ENCODE measurements at regions of chr19 and their contacts with region 1.

Region 1: DNA sequence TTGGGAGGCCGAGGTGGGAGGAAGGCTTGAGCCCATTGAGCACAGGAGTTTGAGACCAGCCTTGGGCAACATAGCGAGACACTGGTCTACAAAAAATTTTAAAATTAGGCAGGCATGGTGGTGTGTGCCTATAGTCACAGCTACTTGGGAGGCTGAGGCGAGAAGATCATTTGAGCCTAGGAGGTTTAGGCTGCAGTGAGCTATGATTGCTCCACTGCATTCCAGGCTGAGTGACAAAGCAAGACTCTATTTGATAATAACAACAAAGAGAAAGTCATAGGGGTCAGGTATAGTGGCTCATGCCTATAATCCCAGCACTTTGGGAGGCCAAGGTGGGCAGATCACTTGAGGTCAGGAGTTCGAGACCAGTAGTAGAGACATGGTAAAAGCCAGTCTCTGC is 4.6 kb upstream of the SLC44A2 start:
- DNase-seq: no peak
- ATAC-seq: no peak
- H3K4me3 Mint-ChIP-seq: no peak overlapping the region
- H3K27ac Mint-ChIP-seq: peak overlapping the region; percentile 55
- H3K4me1 Mint-ChIP-seq: peaks cover 27% of the 10 kb centered on the region
- H3K27me3 Mint-ChIP-seq: no peaks in the 10 kb centered on the region

Region 2: GRCh38 chr19:10644260-10645007 is 23.6 kb after region 1 on chr19:
- CTCF ChIA-PET with region 1: interaction called, 17 read pairs
- POLR2A ChIA-PET with region 1: no interaction called
- intact Hi-C with region 1: no loop called
- DNase-seq: peak; percentile 91
- ATAC-seq: peak; percentile 87
- H3K4me3 Mint-ChIP-seq: no peak overlapping the region
- H3K27ac Mint-ChIP-seq: no peak overlapping the region
- H3K4me1 Mint-ChIP-seq: peaks cover 30% of the 10 kb centered on the region
- H3K27me3 Mint-ChIP-seq: no peaks in the 10 kb centered on the region

Region 3: GRCh38 chr19:10760273-10760944 is 139.6 kb after region 1 on chr19:
- CTCF ChIA-PET with region 1: no interaction called
- POLR2A ChIA-PET with region 1: no interaction called
- intact Hi-C with region 1: no loop called
- DNase-seq: peak; percentile 72
- ATAC-seq: peak; percentile 56
- H3K4me3 Mint-ChIP-seq: peak overlapping the region; percentile 70
- H3K27ac Mint-ChIP-seq: peak overlapping the region; percentile 84
- H3K4me1 Mint-ChIP-seq: peaks cover 83% of the 10 kb centered on the region
- H3K27me3 Mint-ChIP-seq: no peaks in the 10 kb centered on the region

Measured in activated CD4-positive, alpha-beta T cell treated with anti-CD3 and anti-CD28 coated beads for 36 hours (primary cell).